ENCODE measurements at regions of chr1 and their contacts with region 1.

Region 1: DNA sequence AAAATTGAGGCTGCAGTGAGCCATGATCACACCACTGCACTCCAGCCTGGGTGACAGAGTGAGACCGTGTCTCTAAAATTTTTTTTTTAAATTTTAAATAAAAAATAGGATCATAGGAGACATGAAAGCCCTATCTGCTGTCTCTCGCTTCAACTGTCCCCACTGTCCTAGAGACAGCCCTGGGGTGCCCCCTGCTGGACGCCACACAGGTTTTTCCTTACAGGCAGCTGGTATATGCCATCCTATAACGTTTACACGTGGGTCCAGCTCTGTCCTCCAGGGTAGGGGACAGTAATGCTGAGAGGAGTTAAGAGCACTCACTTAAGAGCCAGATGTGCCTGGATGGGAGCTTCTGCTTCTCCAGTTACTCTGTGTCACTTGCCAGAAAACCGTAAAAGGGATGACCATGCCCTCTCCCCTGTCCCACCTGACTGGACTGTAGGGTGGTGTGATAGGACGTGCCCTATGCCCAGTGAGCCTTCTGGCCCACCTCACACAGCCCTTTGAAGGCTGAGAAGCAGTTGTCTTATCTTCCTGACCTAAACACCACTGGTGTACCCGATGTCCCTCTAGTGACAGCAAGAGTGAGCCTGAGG is 8.5 kb downstream of the FBXO2 start:
- DNase-seq: peak; percentile 57 to 85 (median 81)
- ATAC-seq: peak; percentile 47
- H3K4me3 ChIP-seq: no peak overlapping the region
- H3K4me3 Mint-ChIP-seq: no peak overlapping the region
- H3K27ac ChIP-seq: no peak overlapping the region
- H3K27ac Mint-ChIP-seq: no peak overlapping the region
- H3K4me1 ChIP-seq: peaks cover 17% of the 10 kb centered on the region
- H3K4me1 Mint-ChIP-seq: peaks cover 15% of the 10 kb centered on the region
- H3K27me3 ChIP-seq: no peaks in the 10 kb centered on the region
- H3K27me3 Mint-ChIP-seq: no peaks in the 10 kb centered on the region
- CTCF ChIP-seq: peak; percentile 85

Region 2: GRCh38 chr1:11289064-11289463 is 356.7 kb before region 1 on chr1:
- CTCF ChIA-PET with region 1: no interaction called
- POLR2A ChIA-PET with region 1: no interaction called
- intact Hi-C with region 1: no loop called
- DNase-seq: no peak
- ATAC-seq: no peak
- H3K4me3 ChIP-seq: no peak overlapping the region
- H3K4me3 Mint-ChIP-seq: no peak overlapping the region
- H3K27ac ChIP-seq: no peak overlapping the region
- H3K27ac Mint-ChIP-seq: no peak overlapping the region
- H3K4me1 ChIP-seq: peaks cover 25% of the 10 kb centered on the region
- H3K4me1 Mint-ChIP-seq: peaks cover 62% of the 10 kb centered on the region
- H3K27me3 ChIP-seq: no peaks in the 10 kb centered on the region
- H3K27me3 Mint-ChIP-seq: no peaks in the 10 kb centered on the region
- CTCF ChIP-seq: no peak

Region 3: GRCh38 chr1:11320153-11320936 is 325.4 kb before region 1 on chr1:
- CTCF ChIA-PET with region 1: interaction called, 6 read pairs
- POLR2A ChIA-PET with region 1: no interaction called
- intact Hi-C with region 1: loop called (anchors 1 to 5 kb)
- DNase-seq: peak in 8 of 9 experiments; percentile 6 to 62 (median 46)
- ATAC-seq: no peak
- H3K4me3 ChIP-seq: no peak overlapping the region
- H3K4me3 Mint-ChIP-seq: no peak overlapping the region
- H3K27ac ChIP-seq: no peak overlapping the region
- H3K27ac Mint-ChIP-seq: no peak overlapping the region
- H3K4me1 ChIP-seq: peaks cover 6% of the 10 kb centered on the region
- H3K4me1 Mint-ChIP-seq: peaks cover 6% of the 10 kb centered on the region
- H3K27me3 ChIP-seq: peaks cover 0 to 3% of the 10 kb centered on the region in 2 experiments
- H3K27me3 Mint-ChIP-seq: no peaks in the 10 kb centered on the region
- CTCF ChIP-seq: peak; percentile 47

Region 4: DNA sequence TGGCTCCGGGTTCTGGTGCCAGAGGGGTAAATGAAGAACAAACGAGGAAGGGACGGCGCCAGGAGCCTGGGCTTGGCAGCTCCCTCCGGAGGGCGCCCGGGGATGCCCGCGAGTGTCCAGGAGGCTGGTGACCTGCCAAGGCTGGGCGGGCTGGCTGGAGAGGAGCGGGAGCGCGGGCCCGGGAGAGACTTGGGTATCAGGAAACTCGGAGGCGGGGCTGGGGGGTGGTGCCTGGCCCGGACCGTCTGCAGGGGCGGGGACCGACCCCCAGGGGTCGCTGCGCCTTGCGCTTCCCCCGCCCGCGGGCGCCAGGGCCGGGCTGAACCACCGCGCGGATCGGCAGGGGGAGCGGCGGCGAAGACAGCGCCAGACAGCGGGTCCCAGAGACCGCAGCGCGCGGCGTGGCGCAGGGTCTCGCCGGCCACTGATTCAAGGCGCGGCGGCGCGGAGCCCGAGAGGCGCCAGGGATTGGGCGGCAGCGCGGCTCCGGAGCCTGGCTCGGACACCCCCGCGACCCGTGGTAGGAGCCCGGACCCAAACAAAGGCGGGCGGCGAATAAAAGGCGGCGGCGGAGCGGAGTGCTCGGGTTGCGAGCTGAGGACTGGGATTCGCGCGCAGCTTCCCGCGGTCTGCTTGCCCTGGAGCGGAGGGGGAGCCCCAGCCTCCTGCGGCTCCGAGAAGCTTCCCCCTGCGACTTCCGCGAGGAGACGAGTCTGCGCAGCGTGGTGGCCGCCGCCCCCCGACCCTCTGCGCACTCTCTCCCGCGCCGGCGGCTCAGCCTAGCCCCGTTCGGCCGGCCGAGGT is 167.0 kb before region 1 on chr1 and contains the start of gene DISP3:
- CTCF ChIA-PET with region 1: no interaction called
- POLR2A ChIA-PET with region 1: no interaction called
- intact Hi-C with region 1: loop called in 1 of 2 experiments (anchors 5 kb)
- DNase-seq: peak; percentile 44 to 84 (median 63)
- ATAC-seq: peak; percentile 91
- H3K4me3 ChIP-seq: peak within 1 kb of the TSS; percentile 51 to 62
- H3K4me3 Mint-ChIP-seq: peak within 1 kb of the TSS; percentile 70
- H3K27ac ChIP-seq: no peak within 1 kb of the TSS
- H3K27ac Mint-ChIP-seq: no peak within 1 kb of the TSS
- H3K4me1 ChIP-seq: peaks cover 11% of the 10 kb centered on the region
- H3K4me1 Mint-ChIP-seq: peaks cover 15% of the 10 kb centered on the region
- H3K27me3 ChIP-seq: peaks cover 0 to 24% of the 10 kb centered on the region in 2 experiments
- H3K27me3 Mint-ChIP-seq: peaks cover 54% of the 10 kb centered on the region
- CTCF ChIP-seq: peak; percentile 49
- total RNA-seq, gene DISP3: 0.28 to 0.57 TPM

Region 5: GRCh38 chr1:11571906-11572616 is 73.7 kb before region 1 on chr1:
- CTCF ChIA-PET with region 1: no interaction called
- POLR2A ChIA-PET with region 1: no interaction called
- intact Hi-C with region 1: no loop called
- DNase-seq: peak in 2 of 9 experiments; percentile 9 to 14
- ATAC-seq: no peak
- H3K4me3 ChIP-seq: no peak overlapping the region
- H3K4me3 Mint-ChIP-seq: no peak overlapping the region
- H3K27ac ChIP-seq: no peak overlapping the region
- H3K27ac Mint-ChIP-seq: no peak overlapping the region
- H3K4me1 ChIP-seq: no peaks in the 10 kb centered on the region
- H3K4me1 Mint-ChIP-seq: peaks cover 3% of the 10 kb centered on the region
- H3K27me3 ChIP-seq: peaks cover 2 to 5% of the 10 kb centered on the region in 2 experiments
- H3K27me3 Mint-ChIP-seq: peaks cover 21% of the 10 kb centered on the region
- CTCF ChIP-seq: no peak

Region 6: GRCh38 chr1:11661103-11661502 is 15.3 kb after region 1 on chr1:
- CTCF ChIA-PET with region 1: interaction called, 11 read pairs
- POLR2A ChIA-PET with region 1: interaction called, 4 read pairs
- intact Hi-C with region 1: loop called in 1 of 2 experiments (anchors 1 kb)
- DNase-seq: no peak
- ATAC-seq: no peak
- H3K4me3 ChIP-seq: no peak overlapping the region
- H3K4me3 Mint-ChIP-seq: no peak overlapping the region
- H3K27ac ChIP-seq: no peak overlapping the region
- H3K27ac Mint-ChIP-seq: no peak overlapping the region
- H3K4me1 ChIP-seq: peaks cover 6% of the 10 kb centered on the region
- H3K4me1 Mint-ChIP-seq: peaks cover 5% of the 10 kb centered on the region
- H3K27me3 ChIP-seq: no peaks in the 10 kb centered on the region
- H3K27me3 Mint-ChIP-seq: no peaks in the 10 kb centered on the region
- CTCF ChIP-seq: no peak

Region 7: GRCh38 chr1:11893907-11894251 is 248.1 kb after region 1 on chr1:
- CTCF ChIA-PET with region 1: no interaction called
- POLR2A ChIA-PET with region 1: no interaction called
- intact Hi-C with region 1: loop called in 1 of 2 experiments (anchors 5 kb)
- DNase-seq: peak; percentile 37 to 78 (median 70)
- ATAC-seq: peak; percentile 89
- H3K4me3 ChIP-seq: no peak overlapping the region
- H3K4me3 Mint-ChIP-seq: no peak overlapping the region
- H3K27ac ChIP-seq: no peak overlapping the region
- H3K27ac Mint-ChIP-seq: no peak overlapping the region
- H3K4me1 ChIP-seq: no peaks in the 10 kb centered on the region
- H3K4me1 Mint-ChIP-seq: no peaks in the 10 kb centered on the region
- H3K27me3 ChIP-seq: peaks cover 4 to 17% of the 10 kb centered on the region in 2 experiments
- H3K27me3 Mint-ChIP-seq: peaks cover 40% of the 10 kb centered on the region
- CTCF ChIP-seq: peak; percentile 84